CD8-positive, alpha-beta T cell (primary cell): ENCODE measurements at regions of chr12 and their contacts with region 1.

Region 1: GRCh38 chr12:3885277-3886094 is 12.3 kb upstream of the PARP11 start:
- DNase-seq: peak in 8 of 9 experiments; percentile 28 to 76 (median 43)
- ATAC-seq: peak; percentile 62
- H3K4me3 ChIP-seq: no peak overlapping the region
- H3K4me3 Mint-ChIP-seq: no peak overlapping the region
- H3K27ac ChIP-seq: no peak overlapping the region
- H3K27ac Mint-ChIP-seq: peak overlapping the region; percentile 83
- H3K4me1 ChIP-seq: no peaks in the 10 kb centered on the region
- H3K4me1 Mint-ChIP-seq: peaks cover 9% of the 10 kb centered on the region
- H3K27me3 ChIP-seq: no peaks in the 10 kb centered on the region
- H3K27me3 Mint-ChIP-seq: no peaks in the 10 kb centered on the region
- CTCF ChIP-seq: peak; percentile 93

Region 2: GRCh38 chr12:3920351-3921150 is 35.1 kb after region 1 on chr12:
- CTCF ChIA-PET with region 1: interaction called, 16 read pairs
- POLR2A ChIA-PET with region 1: interaction called, 3 read pairs
- intact Hi-C with region 1: no loop called
- DNase-seq: no peak
- ATAC-seq: no peak
- H3K4me3 ChIP-seq: no peak overlapping the region
- H3K4me3 Mint-ChIP-seq: no peak overlapping the region
- H3K27ac ChIP-seq: no peak overlapping the region
- H3K27ac Mint-ChIP-seq: no peak overlapping the region
- H3K4me1 ChIP-seq: peaks cover 6% of the 10 kb centered on the region
- H3K4me1 Mint-ChIP-seq: peaks cover 23% of the 10 kb centered on the region
- H3K27me3 ChIP-seq: no peaks in the 10 kb centered on the region
- H3K27me3 Mint-ChIP-seq: no peaks in the 10 kb centered on the region
- CTCF ChIP-seq: no peak

Region 3: DNA sequence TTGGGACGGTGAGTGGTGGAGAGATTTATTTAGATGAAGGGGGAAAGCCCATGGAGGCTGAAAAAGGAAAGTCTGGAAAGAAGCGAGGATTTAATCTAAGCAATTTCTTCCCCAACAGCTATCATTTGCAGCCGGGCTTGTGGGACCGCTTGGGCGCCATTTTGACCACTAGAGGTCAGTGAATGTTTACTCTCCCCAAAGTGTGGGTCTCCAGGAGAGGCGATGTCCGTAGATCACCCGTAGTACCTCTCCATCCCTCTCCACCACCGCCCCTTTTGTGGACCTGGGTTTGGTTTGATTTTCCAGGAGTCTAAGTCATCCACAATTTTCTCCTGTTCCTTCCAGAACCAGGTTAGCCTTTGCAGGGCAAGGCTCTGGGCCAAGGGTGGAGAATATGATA is 79.0 kb after region 1 on chr12:
- CTCF ChIA-PET with region 1: interaction called, 232 read pairs
- POLR2A ChIA-PET with region 1: interaction called, 25 read pairs
- intact Hi-C with region 1: loop called (anchors 1 kb)
- DNase-seq: no peak
- ATAC-seq: no peak
- H3K4me3 ChIP-seq: no peak overlapping the region
- H3K4me3 Mint-ChIP-seq: no peak overlapping the region
- H3K27ac ChIP-seq: no peak overlapping the region
- H3K27ac Mint-ChIP-seq: no peak overlapping the region
- H3K4me1 ChIP-seq: peaks cover 20% of the 10 kb centered on the region
- H3K4me1 Mint-ChIP-seq: peaks cover 29% of the 10 kb centered on the region
- H3K27me3 ChIP-seq: no peaks in the 10 kb centered on the region
- H3K27me3 Mint-ChIP-seq: no peaks in the 10 kb centered on the region
- CTCF ChIP-seq: no peak

Region 4: DNA sequence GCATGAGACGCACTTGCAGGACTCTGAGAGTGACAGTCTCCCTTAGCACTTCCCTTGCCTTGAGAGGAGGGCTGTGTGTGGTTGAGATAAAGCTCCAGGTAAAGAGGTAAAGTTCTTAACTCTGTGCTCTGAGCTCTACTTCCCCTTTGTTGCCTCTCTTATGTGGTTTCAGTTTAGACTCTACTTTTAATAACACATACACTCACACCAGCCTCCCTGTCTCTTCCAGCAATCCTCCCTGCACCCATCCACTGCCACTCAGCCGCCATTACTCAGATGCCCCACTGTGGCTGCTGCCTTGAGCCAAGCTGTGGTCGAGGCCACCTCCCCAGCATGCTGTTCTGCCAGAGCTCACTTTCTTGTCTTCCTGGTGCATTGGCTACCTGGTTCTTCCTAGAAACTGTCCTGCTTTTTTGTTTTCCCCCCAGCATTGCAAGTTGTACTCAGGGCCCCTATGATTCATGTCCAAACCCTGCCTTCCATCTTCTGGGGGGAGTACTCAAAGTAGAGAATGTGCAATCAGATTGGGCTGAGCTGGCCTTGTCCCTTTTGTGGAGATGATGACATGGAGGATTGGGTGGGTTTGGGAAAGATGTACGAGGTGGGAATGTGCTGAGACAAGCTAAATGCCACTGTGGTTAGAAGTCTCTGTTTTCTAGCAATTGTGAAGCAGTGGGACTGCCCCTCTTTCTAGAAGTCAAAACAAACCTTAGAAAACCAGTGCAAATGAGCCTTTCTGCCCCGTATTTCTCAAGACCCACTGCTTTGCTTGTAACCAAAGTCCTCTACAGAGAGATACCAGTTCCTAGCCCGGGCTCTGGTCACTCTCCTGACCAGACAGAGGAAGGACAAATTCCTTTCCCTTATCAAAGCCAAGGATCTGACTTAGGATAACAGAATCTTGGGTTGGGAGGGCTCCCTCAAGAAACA is 103.3 kb after region 1 on chr12:
- CTCF ChIA-PET with region 1: interaction called, 226 read pairs
- POLR2A ChIA-PET with region 1: interaction called, 4 read pairs
- intact Hi-C with region 1: no loop called
- DNase-seq: peak in 6 of 9 experiments; percentile 26 to 60 (median 30)
- ATAC-seq: peak; percentile 89
- H3K4me3 ChIP-seq: peak overlapping the region in 1 of 2 experiments; percentile 2
- H3K4me3 Mint-ChIP-seq: peak overlapping the region; percentile 60
- H3K27ac ChIP-seq: peak overlapping the region; percentile 5 to 52
- H3K27ac Mint-ChIP-seq: peak overlapping the region; percentile 91
- H3K4me1 ChIP-seq: peaks cover 29% of the 10 kb centered on the region
- H3K4me1 Mint-ChIP-seq: peaks cover 30% of the 10 kb centered on the region
- H3K27me3 ChIP-seq: no peaks in the 10 kb centered on the region
- H3K27me3 Mint-ChIP-seq: no peaks in the 10 kb centered on the region
- CTCF ChIP-seq: no peak

Region 5: GRCh38 chr12:4030929-4031702 is 145.6 kb after region 1 on chr12:
- CTCF ChIA-PET with region 1: interaction called, 212 read pairs
- POLR2A ChIA-PET with region 1: interaction called, 5 read pairs
- intact Hi-C with region 1: no loop called
- DNase-seq: peak; percentile 48 to 88 (median 71)
- ATAC-seq: peak; percentile 91
- H3K4me3 ChIP-seq: peak overlapping the region; percentile 40 to 49
- H3K4me3 Mint-ChIP-seq: peak overlapping the region; percentile 78
- H3K27ac ChIP-seq: peak overlapping the region; percentile 37 to 40
- H3K27ac Mint-ChIP-seq: peak overlapping the region; percentile 70
- H3K4me1 ChIP-seq: peaks cover 32% of the 10 kb centered on the region
- H3K4me1 Mint-ChIP-seq: peaks cover 41% of the 10 kb centered on the region
- H3K27me3 ChIP-seq: no peaks in the 10 kb centered on the region
- H3K27me3 Mint-ChIP-seq: no peaks in the 10 kb centered on the region
- CTCF ChIP-seq: no peak

Region 6: DNA sequence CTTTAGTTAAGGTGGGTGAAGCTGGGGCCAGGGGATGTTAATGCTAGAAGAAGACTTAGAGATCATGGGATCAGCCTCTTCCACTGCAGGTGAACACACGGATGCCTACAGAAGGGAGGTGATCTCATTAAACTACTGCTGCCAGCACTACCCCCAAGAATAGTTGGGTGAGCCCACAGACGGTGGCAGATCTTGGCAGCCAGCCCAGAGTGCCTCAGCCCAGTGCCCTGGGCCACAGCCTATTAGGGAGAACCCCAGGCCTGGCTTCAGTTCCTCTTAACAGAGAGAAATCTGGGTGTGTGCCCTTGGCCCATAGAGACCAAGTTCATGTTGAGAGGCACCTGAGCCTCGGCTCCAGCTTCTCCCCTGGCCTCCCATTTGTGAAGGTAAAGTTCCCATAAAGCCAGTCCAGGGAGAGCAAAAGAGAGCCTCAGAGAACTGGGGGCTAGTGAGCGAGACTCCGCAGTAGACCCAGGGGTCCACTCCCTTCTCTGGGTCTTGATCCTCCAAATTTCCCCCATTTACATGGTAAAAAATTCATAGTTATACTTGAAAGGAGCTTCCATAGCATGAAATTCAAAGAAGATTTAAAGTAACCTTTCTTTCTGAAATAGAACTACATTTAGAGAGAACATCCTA is 263.1 kb after region 1 on chr12:
- CTCF ChIA-PET with region 1: interaction called, 24 read pairs
- POLR2A ChIA-PET with region 1: no interaction called
- intact Hi-C with region 1: no loop called
- DNase-seq: peak; percentile 29 to 75 (median 51)
- ATAC-seq: peak; percentile 65
- H3K4me3 ChIP-seq: no peak overlapping the region
- H3K4me3 Mint-ChIP-seq: no peak overlapping the region
- H3K27ac ChIP-seq: no peak overlapping the region
- H3K27ac Mint-ChIP-seq: no peak overlapping the region
- H3K4me1 ChIP-seq: peaks cover 20% of the 10 kb centered on the region
- H3K4me1 Mint-ChIP-seq: peaks cover 36% of the 10 kb centered on the region
- H3K27me3 ChIP-seq: no peaks in the 10 kb centered on the region
- H3K27me3 Mint-ChIP-seq: no peaks in the 10 kb centered on the region
- CTCF ChIP-seq: no peak